Colonic mucosa (tissue), 4 donors: ENCODE measurements at regions of chr1 and their contacts with region 1.

Region 1: GRCh38 chr1:23496490-23497181 is 12.7 kb upstream of the ASAP3 start:
- DNase-seq: no peak
- H3K4me3 ChIP-seq: no peak overlapping the region
- H3K27ac ChIP-seq: no peak overlapping the region
- H3K4me1 ChIP-seq: no peaks in the 10 kb centered on the region
- H3K27me3 ChIP-seq: no peaks in the 10 kb centered on the region
- CTCF ChIP-seq: no peak

Region 2: DNA sequence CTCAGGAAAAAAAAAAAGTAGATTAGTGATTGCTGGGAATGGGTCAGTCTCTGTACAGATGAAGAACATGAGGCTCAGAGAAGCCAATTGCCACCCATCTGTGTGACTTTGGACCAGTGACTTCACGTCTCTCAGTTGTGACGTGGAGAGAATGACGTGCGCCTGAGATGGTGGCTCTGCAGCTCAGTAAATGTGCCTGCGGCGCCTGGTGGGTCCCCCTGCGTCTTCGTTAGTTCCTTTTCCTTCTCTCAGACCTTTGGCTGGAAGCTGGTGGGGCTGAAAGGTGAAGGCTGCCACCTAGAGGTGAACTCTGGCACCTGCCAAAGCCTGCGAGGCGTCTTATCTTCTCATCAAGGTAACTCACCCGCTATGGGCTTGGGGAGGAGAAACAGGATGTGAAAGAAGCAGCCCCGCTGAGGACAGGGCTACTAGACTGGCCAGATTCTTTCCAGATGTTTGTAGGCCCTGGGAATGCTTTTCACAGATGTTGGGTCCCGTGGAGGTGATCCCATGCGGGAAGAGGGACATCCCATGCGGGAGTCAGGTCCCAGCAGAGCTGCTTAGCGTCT is 43.1 kb after region 1 on chr1:
- intact Hi-C with region 1: loop called (anchors 2 kb)
- DNase-seq: peak; percentile 93
- H3K4me3 ChIP-seq: no peak overlapping the region
- H3K27ac ChIP-seq: no peak overlapping the region
- H3K4me1 ChIP-seq: peaks cover under 1% of the 10 kb centered on the region
- H3K27me3 ChIP-seq: no peaks in the 10 kb centered on the region
- CTCF ChIP-seq: peak; percentile 87